MCF 10A (cell line): ENCODE measurements at regions of chr9 and their contacts with region 1.

Region 1: GRCh38 chr9:122099271-122099869 is 6.3 kb upstream of the TTLL11 start:
- DNase-seq: peak; percentile 79
- H3K4me3 Mint-ChIP-seq: no peak overlapping the region
- H3K27ac Mint-ChIP-seq: no peak overlapping the region
- H3K4me1 Mint-ChIP-seq: peaks cover 6% of the 10 kb centered on the region
- H3K27me3 Mint-ChIP-seq: no peaks in the 10 kb centered on the region
- CTCF ChIP-seq: peak; percentile 84

Region 2: DNA sequence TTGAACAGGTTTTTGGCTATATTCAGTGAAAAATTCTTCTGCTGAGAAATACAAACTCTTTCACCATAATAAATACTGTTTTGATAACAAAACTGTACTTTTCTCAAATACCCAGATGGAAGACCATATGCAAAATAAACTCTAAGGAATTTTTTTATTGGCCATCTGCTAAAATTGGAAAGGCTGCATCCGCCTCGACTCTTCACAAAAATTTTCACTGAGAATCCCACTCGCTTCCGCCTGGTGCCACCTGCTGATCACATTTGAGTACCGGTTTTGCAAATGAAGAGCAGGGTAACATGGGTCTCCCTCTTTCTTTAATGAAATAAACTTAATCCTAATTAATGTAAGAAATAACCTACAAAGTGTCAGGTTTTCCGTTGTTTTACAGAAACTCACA is 82.6 kb before region 1 on chr9:
- CTCF ChIA-PET with region 1: no interaction called
- POLR2A ChIA-PET with region 1: no interaction called
- intact Hi-C with region 1: no loop called
- DNase-seq: peak; percentile 15
- H3K4me3 Mint-ChIP-seq: no peak overlapping the region
- H3K27ac Mint-ChIP-seq: no peak overlapping the region
- H3K4me1 Mint-ChIP-seq: no peaks in the 10 kb centered on the region
- H3K27me3 Mint-ChIP-seq: no peaks in the 10 kb centered on the region
- CTCF ChIP-seq: no peak

Region 3: DNA sequence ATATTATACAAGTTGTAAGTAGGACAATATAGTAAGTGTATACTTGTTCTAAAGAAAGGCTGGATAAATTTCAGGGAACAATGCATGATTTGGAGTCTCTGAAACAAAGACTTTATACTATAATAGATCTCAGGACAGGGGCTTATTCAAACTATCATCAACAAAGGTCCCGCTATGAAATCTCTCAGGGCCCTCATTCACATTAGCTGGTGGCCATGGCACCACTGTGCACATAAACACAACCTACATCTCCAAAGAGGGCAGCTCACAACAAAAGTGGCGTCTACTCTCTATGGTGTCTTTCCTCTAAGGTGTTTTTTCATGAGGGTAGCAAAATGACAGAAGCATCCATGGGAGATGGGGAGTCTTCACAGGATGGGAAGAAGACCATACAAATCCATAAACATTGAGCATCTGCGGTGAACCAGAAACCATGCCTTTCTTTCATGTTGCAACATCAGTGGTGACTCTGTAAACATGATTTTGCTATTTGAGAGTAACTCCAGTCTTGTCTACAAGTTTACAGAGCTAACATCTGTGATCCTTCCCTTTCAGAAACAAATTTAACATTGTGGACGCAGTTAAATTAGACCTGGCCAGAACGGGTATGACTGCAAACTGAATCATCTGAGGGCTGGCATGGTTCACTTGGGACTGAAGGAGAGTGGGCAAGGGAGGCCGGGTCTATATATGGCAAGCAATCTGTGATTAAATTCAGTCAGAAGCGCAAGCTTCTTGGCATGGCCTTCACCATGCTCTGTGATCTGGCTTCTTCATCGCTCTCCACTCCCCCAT is 11.8 kb before region 1 on chr9:
- CTCF ChIA-PET with region 1: interaction called, 28 read pairs
- POLR2A ChIA-PET with region 1: no interaction called
- intact Hi-C with region 1: no loop called
- DNase-seq: no peak
- H3K4me3 Mint-ChIP-seq: no peak overlapping the region
- H3K27ac Mint-ChIP-seq: no peak overlapping the region
- H3K4me1 Mint-ChIP-seq: peaks cover 27% of the 10 kb centered on the region
- H3K27me3 Mint-ChIP-seq: no peaks in the 10 kb centered on the region
- CTCF ChIP-seq: no peak

Region 4: GRCh38 chr9:122144836-122145591 is 45.6 kb after region 1 on chr9:
- CTCF ChIA-PET with region 1: interaction called, 16 read pairs
- POLR2A ChIA-PET with region 1: no interaction called
- intact Hi-C with region 1: no loop called
- DNase-seq: no peak
- H3K4me3 Mint-ChIP-seq: no peak overlapping the region
- H3K27ac Mint-ChIP-seq: no peak overlapping the region
- H3K4me1 Mint-ChIP-seq: no peaks in the 10 kb centered on the region
- H3K27me3 Mint-ChIP-seq: no peaks in the 10 kb centered on the region
- CTCF ChIP-seq: no peak

Region 5: GRCh38 chr9:122356627-122357026 is 257.3 kb after region 1 on chr9:
- CTCF ChIA-PET with region 1: interaction called, 164 read pairs
- POLR2A ChIA-PET with region 1: no interaction called
- intact Hi-C with region 1: no loop called
- DNase-seq: no peak
- H3K4me3 Mint-ChIP-seq: no peak overlapping the region
- H3K27ac Mint-ChIP-seq: no peak overlapping the region
- H3K4me1 Mint-ChIP-seq: peaks cover 10% of the 10 kb centered on the region
- H3K27me3 Mint-ChIP-seq: no peaks in the 10 kb centered on the region
- CTCF ChIP-seq: no peak

Region 6: GRCh38 chr9:122498883-122499288 is 399.5 kb after region 1 on chr9:
- CTCF ChIA-PET with region 1: interaction called, 12 read pairs
- POLR2A ChIA-PET with region 1: no interaction called
- intact Hi-C with region 1: no loop called
- DNase-seq: peak; percentile 82
- H3K4me3 Mint-ChIP-seq: no peak overlapping the region
- H3K27ac Mint-ChIP-seq: no peak overlapping the region
- H3K4me1 Mint-ChIP-seq: no peaks in the 10 kb centered on the region
- H3K27me3 Mint-ChIP-seq: no peaks in the 10 kb centered on the region
- CTCF ChIP-seq: peak; percentile 72